ENCODE measurements at regions of chr2 and their contacts with region 1.

Region 1: DNA sequence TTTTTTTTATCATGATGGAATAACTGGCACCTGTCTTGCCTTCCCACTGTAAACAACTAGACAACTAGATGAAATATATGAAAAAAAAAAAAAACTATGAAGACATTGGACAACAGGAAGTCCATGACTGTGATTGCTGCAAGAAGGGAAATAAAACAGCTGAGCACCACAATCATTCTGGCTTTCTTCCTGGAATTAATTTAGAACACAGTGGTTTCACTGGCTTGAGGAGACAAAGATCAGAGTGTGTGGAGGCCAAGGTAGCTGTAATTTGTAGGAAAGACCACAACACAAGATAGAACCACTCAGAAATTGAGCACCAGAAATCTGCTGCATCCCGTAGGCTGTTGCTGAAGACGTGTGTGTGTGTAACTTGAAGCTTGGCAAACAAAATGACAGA is 121.1 kb upstream of the PID1 start:
- DNase-seq: no peak

Region 2: GRCh38 chr2:229416116-229416694 is 24.0 kb after region 1 on chr2:
- intact Hi-C with region 1: loop called (anchors 2 kb)
- DNase-seq: no peak

Region 3: GRCh38 chr2:229501051-229501794 is 109.0 kb after region 1 on chr2:
- intact Hi-C with region 1: no loop called
- DNase-seq: no peak